GM13976 (cell line): ENCODE measurements at regions of chr9 and their contacts with region 1.

Region 1: GRCh38 chr9:121369595-121370265 is at the start of gene STOM:
- DNase-seq: no peak
- CTCF ChIP-seq: no peak

Region 2: DNA sequence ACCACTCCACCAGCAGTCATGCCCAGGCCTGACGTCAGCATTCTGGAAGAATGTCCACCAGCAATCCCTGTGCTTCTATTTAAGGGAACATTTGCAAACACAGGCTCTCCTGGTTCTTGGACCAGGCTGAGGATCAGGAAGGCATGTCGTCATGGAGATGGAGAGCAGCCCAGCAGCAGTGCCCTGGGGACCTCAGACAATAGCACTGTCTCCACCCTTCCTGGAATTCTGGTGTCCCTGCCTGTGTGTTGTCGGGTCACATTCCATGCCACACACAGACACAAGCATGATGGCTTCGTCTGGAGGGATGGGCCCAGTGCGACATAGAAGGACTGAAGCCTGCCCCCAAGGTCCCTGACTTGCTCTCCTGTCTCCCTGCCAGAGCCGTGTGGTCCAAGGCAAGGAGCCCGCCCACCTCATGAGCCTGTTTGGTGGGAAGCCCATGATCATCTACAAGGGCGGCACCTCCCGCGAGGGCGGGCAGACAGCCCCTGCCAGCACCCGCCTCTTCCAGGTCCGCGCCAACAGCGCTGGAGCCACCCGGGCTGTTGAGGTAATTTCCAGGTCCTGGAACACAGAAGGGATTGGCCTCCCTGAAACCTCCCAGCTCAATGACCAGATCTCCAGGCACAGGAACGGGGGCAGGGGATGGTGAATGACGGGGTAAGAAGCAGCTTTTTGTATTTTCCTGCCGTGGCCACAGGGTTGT is 43.4 kb before region 1 on chr9:
- in situ Hi-C with region 1: loop called (anchors 10 kb)
- DNase-seq: peak; percentile 8
- CTCF ChIP-seq: no peak